GM18951 (cell line): ENCODE measurements at regions of chr14 and their contacts with region 1.

Region 1: DNA sequence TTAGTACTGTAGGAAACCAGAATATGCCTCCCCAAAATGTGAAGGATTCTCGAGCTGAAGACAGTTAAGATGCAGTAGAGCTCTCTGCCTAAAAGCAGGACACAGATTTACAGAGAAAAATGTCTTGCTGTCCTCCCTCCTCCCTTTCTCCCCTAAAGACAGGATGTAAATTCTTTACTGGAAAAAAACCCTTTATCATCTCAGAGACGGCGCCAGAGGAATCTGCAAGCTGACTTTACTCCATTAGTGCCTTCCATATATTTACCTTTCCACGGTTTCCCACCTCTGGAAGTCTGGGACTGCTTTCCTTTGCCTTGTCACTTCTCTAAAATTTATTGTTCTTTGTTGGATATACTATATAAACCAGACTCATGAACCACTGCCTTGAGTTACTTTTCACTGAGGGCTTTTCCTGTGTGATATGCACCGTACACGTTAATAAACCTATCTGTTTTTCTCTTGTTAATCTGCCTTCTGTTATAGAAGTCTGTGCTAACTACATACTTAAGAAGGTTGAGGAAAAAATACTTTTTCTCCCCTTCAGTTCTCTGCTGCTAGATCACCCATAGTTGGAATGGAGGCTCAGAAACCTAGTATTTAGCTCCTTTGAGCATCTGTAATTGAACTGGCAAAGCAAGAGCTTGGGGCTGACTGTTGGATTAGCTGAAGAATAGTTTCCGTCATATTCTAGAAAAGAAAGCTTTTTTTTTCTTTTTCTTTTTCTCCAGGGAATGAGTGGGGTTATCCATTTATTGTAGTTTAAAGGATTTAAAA is 99.9 kb downstream of the RAD51B start:
- POLR2A ChIP-seq: no peak

Region 2: DNA sequence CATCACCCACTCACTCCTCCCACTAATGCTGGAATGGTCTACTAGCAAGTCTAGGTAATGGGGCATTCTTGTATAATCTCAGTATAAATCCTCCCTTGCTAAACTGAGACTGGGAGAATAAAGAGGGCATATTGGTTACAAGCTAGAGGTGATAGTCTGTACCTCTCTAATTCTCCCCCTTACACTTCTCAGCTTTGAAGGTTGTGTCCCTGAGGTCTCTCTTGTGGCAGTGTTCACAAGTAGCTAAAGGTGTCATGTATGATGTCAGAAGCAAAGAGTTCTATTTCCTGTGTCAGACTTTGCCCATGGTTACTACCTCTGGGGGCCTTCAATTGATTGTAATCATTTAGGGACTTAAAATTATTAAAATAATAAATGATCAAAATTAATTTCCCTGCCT is 1459.8 kb before region 1 on chr14:
- in situ Hi-C with region 1: no loop called
- POLR2A ChIP-seq: no peak

Region 3: GRCh38 chr14:67837011-67837624 is 82.3 kb before region 1 on chr14:
- in situ Hi-C with region 1: loop called (anchors 10 kb)
- POLR2A ChIP-seq: no peak

Region 4: GRCh38 chr14:68862954-68863594 is 943.6 kb after region 1 on chr14:
- in situ Hi-C with region 1: no loop called
- POLR2A ChIP-seq: no peak